Mammary epithelial cell (primary cell): ENCODE measurements at regions of chr2 and their contacts with region 1.

Region 1: GRCh38 chr2:66434679-66435548 is at the start of gene MEIS1:
- DNase-seq: peak; percentile 95
- H3K4me3 ChIP-seq: peak within 1 kb of the TSS; percentile 90 to 97 (median 97)
- H3K27ac ChIP-seq: peak within 1 kb of the TSS; percentile 62
- H3K4me1 ChIP-seq: peaks cover 11% of the 10 kb centered on the region
- H3K27me3 ChIP-seq: no peaks in the 10 kb centered on the region
- CTCF ChIP-seq: no peak
- total RNA-seq, gene MEIS1: 4.3 to 4.4 TPM

Region 2: DNA sequence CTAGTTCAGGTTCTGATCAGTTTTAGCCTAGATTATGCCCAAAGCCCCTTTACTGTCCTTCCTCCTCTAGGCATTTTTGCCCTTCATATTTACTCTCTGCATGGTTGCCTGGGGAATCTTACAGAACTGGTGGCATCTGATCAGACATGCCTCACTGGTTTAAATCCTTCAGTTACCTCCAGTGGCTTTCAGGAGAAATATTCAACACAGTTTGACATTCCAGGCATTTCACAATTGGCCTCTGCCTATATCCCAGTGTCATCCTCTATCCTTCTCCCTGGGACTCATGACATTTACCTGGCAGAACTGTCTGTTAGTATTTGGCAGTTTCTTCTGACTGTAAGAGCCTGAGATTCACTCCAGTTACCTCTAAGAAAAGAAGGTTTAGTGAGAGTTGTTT is 152.9 kb before region 1 on chr2:
- CTCF ChIA-PET with region 1: no interaction called
- dilution Hi-C with region 1: no loop called
- in situ Hi-C with region 1: no loop called
- intact Hi-C with region 1: no loop called
- DNase-seq: no peak
- H3K4me3 ChIP-seq: no peak overlapping the region
- H3K27ac ChIP-seq: no peak overlapping the region
- H3K4me1 ChIP-seq: no peaks in the 10 kb centered on the region
- H3K27me3 ChIP-seq: no peaks in the 10 kb centered on the region
- CTCF ChIP-seq: no peak

Region 3: DNA sequence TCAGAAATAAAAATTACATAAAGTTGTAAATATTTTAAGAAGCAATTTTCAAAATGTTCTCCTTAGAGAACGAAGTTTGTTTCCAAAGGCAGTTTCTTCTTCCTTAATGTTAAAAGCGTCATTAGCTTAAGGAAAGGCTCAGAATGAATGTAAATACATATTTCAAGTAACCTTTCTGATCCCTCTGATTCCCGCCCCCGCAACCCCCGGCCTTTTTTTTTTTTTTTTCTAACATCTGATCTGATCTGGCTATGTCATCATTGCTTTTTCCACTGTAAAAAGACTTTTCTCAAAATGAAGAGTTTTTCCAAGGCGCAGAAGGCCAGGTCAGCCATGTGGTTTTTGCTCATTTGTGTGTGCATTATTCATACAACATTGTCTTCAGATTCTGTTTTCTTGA is 57.1 kb before region 1 on chr2:
- CTCF ChIA-PET with region 1: no interaction called
- dilution Hi-C with region 1: no loop called
- in situ Hi-C with region 1: no loop called
- intact Hi-C with region 1: no loop called
- DNase-seq: no peak
- H3K4me3 ChIP-seq: no peak overlapping the region
- H3K27ac ChIP-seq: no peak overlapping the region
- H3K4me1 ChIP-seq: no peaks in the 10 kb centered on the region
- H3K27me3 ChIP-seq: peaks cover 4% of the 10 kb centered on the region
- CTCF ChIP-seq: no peak

Region 4: GRCh38 chr2:66390811-66391210 is 44.1 kb before region 1 on chr2:
- CTCF ChIA-PET with region 1: no interaction called
- dilution Hi-C with region 1: no loop called
- in situ Hi-C with region 1: no loop called
- intact Hi-C with region 1: no loop called
- DNase-seq: peak; percentile 59
- H3K4me3 ChIP-seq: peak overlapping the region; percentile 10 to 29 (median 12)
- H3K27ac ChIP-seq: peak overlapping the region; percentile 87
- H3K4me1 ChIP-seq: peaks cover 11% of the 10 kb centered on the region
- H3K27me3 ChIP-seq: peaks cover 2% of the 10 kb centered on the region
- CTCF ChIP-seq: no peak

Region 5: GRCh38 chr2:66481100-66481549 is 46.2 kb after region 1 on chr2:
- CTCF ChIA-PET with region 1: no interaction called
- dilution Hi-C with region 1: no loop called
- in situ Hi-C with region 1: no loop called
- intact Hi-C with region 1: no loop called
- DNase-seq: no peak
- H3K4me3 ChIP-seq: no peak overlapping the region
- H3K27ac ChIP-seq: no peak overlapping the region
- H3K4me1 ChIP-seq: no peaks in the 10 kb centered on the region
- H3K27me3 ChIP-seq: no peaks in the 10 kb centered on the region
- CTCF ChIP-seq: no peak

Region 6: DNA sequence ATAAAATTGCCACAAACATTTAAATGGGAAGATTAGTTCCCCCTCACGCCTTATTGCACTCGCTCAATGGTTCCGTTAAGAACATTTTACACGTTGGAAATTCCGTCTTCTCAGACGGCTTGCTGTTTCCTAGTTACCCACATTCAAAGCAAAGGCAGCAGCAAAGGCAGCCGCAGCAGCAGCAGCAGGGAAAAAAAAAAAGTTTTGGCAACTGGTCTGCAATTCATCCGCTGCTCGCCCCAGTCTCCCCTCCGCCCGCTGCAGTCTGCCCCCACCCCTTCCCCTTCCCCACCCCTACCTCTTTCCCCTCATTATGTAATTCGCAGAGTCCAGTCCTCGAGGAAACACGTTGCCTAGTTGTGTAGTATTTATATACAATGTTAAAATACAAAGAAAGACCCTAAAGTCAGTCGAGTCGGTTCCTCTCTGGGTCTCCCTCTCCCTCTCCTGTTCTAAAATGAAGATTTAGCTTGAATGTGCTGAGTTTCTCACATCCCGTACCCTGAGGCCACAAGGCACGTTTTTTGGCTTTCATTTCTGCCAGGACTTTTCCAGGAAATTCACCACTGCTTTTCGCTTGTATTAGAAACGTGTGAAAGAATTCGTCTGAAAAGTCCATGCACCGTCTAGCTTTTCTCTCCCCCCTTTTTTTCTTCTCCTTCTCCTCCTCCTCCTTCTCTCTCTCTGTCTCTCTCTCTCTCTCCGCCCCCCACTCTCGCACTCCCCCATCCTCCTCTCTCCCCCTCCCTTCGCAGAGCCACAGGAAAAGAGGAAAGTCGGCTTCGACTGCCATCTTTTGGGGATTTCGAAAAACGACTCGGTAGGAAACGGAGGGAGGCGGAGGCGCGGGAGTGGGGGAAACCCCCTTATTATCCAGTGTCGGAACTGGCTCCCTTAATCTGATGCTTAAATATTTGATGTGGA is 140.0 kb after region 1 on chr2:
- CTCF ChIA-PET with region 1: no interaction called
- dilution Hi-C with region 1: no loop called
- in situ Hi-C with region 1: loop called in 1 of 2 experiments (anchors 10 kb)
- intact Hi-C with region 1: loop called (anchors 1 kb)
- DNase-seq: peak; percentile 66
- H3K4me3 ChIP-seq: peak overlapping the region; percentile 54 to 80 (median 55)
- H3K27ac ChIP-seq: no peak overlapping the region
- H3K4me1 ChIP-seq: peaks cover 23% of the 10 kb centered on the region
- H3K27me3 ChIP-seq: peaks cover 25% of the 10 kb centered on the region
- CTCF ChIP-seq: peak; percentile 44 to 67

Region 7: DNA sequence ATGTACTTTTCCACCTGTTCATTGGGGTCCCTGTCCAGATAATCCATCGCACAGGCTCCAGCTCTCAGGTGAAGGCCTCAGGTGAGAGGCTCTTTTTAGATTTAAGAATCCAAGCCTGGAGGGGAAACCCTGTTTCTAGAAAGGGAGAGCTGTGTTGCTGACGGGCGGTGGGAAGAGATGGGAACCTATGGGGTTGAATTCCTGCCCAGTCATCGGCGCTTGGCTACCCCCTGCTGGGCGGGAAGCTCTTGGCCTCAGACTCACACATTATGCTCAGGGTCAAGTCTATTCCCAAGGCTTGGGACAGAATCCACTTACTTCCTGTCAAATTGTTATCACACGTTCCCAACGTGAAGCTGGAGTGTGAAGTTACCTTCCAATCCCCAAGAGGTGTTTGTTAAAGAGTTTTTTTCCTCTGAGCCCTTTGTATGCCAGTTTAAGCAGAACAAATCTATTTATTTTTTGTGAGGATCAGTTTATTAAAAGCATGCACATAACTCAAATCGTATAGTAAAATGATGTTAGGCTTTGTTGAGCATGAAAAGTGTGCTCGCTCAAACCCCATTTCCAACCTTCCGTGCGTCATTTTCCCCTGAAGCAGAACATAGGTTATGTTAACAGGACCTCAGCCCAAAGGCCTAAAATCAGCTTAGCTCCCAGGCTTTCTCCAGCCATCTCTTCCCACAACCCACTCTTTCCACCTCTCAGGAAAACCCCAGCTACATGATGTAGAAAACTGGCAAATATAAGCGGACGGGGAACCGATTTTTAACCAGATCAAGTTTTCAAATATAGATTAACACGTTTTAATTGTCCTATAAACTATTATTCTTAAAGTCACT is 780.5 kb after region 1 on chr2:
- CTCF ChIA-PET with region 1: no interaction called
- dilution Hi-C with region 1: loop called (anchors 25 kb)
- in situ Hi-C with region 1: loop called (anchors 25 kb)
- intact Hi-C with region 1: no loop called
- DNase-seq: peak; percentile 46
- H3K4me3 ChIP-seq: no peak overlapping the region
- H3K27ac ChIP-seq: no peak overlapping the region
- H3K4me1 ChIP-seq: no peaks in the 10 kb centered on the region
- H3K27me3 ChIP-seq: no peaks in the 10 kb centered on the region
- CTCF ChIP-seq: peak; percentile 49 to 71

Region 8: GRCh38 chr2:67451086-67451832 is 1016.3 kb after region 1 on chr2:
- CTCF ChIA-PET with region 1: no interaction called
- dilution Hi-C with region 1: no loop called
- in situ Hi-C with region 1: loop called in 1 of 2 experiments (anchors 25 kb)
- intact Hi-C with region 1: no loop called
- DNase-seq: peak; percentile 100
- H3K4me3 ChIP-seq: no peak overlapping the region
- H3K27ac ChIP-seq: peak overlapping the region; percentile 95
- H3K4me1 ChIP-seq: peaks cover 61% of the 10 kb centered on the region
- H3K27me3 ChIP-seq: no peaks in the 10 kb centered on the region
- CTCF ChIP-seq: no peak

Region 9: GRCh38 chr2:67471681-67472080 is 1036.8 kb after region 1 on chr2:
- CTCF ChIA-PET with region 1: no interaction called
- dilution Hi-C with region 1: no loop called
- in situ Hi-C with region 1: loop called in 1 of 2 experiments (anchors 25 kb)
- intact Hi-C with region 1: loop called (anchors 2 kb)
- DNase-seq: no peak
- H3K4me3 ChIP-seq: no peak overlapping the region
- H3K27ac ChIP-seq: no peak overlapping the region
- H3K4me1 ChIP-seq: no peaks in the 10 kb centered on the region
- H3K27me3 ChIP-seq: no peaks in the 10 kb centered on the region
- CTCF ChIP-seq: no peak

Region 10: GRCh38 chr2:67650291-67651133 is 1215.6 kb after region 1 on chr2:
- CTCF ChIA-PET with region 1: no interaction called
- dilution Hi-C with region 1: no loop called
- in situ Hi-C with region 1: loop called in 1 of 2 experiments (anchors 25 kb)
- intact Hi-C with region 1: loop called (anchors 2 kb)
- DNase-seq: peak; percentile 67
- H3K4me3 ChIP-seq: no peak overlapping the region
- H3K27ac ChIP-seq: no peak overlapping the region
- H3K4me1 ChIP-seq: peaks cover 8% of the 10 kb centered on the region
- H3K27me3 ChIP-seq: no peaks in the 10 kb centered on the region
- CTCF ChIP-seq: peak; percentile 80 to 91

Region 11: DNA sequence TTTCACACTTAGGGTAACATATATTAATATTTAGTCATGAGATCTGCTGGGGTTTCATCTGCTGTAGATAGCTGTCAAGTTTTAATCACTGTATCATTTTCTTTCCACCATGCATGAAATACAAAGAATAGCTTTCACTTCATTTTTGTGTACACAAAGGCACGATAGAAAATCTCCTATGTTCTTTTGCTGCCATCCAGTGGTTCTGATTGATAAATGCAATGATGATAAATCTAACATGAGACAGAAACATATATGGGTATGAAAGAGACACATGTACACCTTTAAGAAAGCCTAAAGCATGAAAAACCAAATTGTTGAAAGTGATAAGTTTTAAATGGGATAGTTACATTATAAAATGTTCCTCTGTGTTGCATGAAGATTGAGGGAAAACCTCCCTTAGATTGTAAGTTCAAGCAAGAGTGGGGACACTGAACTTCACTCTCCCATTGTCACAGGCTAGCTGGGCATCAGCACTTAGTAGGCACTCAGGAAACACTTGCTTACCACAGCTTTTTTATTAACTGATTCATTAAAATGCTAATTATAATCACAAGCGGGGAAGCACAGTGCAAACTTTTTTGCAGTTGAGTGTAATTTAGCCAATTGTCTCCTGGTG is 1596.7 kb after region 1 on chr2:
- CTCF ChIA-PET with region 1: no interaction called
- dilution Hi-C with region 1: no loop called
- in situ Hi-C with region 1: loop called in 1 of 2 experiments (anchors 25 kb)
- intact Hi-C with region 1: no loop called
- DNase-seq: peak; percentile 48
- H3K4me3 ChIP-seq: no peak overlapping the region
- H3K27ac ChIP-seq: no peak overlapping the region
- H3K4me1 ChIP-seq: no peaks in the 10 kb centered on the region
- H3K27me3 ChIP-seq: no peaks in the 10 kb centered on the region
- CTCF ChIP-seq: peak; percentile 67 to 70